GM23248 (cell line): ENCODE measurements at regions of chr15 and their contacts with region 1.

Region 1: GRCh38 chr15:35078221-35078915 is 6.7 kb downstream of the NANOGP8 start:
- DNase-seq: peak; percentile 72
- H3K4me3 ChIP-seq: no peak overlapping the region
- H3K27ac ChIP-seq: no peak overlapping the region
- H3K4me1 ChIP-seq: no peaks in the 10 kb centered on the region
- H3K27me3 ChIP-seq: no peaks in the 10 kb centered on the region

Region 2: DNA sequence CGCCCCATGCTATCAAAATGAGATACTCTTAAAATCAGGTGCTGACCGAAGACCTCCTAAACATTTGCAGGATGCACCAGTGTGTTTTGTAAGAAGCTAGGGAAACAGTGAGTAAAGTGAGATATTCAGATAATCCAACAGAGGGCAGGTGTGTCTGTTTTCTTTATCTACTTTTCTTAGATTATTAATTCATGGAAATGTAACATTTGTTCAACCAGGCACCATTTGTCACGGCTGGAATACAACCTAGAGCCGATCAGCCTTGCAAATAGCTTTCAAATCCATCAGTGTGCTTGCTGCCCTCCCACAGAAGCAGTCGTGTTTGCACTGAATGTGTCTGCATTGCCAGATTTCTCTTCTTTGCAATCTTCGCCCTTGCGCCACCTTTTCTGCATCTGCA is 1312.0 kb before region 1 on chr15:
- in situ Hi-C with region 1: no loop called
- DNase-seq: peak; percentile 20
- H3K4me3 ChIP-seq: no peak overlapping the region
- H3K27ac ChIP-seq: no peak overlapping the region
- H3K4me1 ChIP-seq: no peaks in the 10 kb centered on the region
- H3K27me3 ChIP-seq: peaks cover 19% of the 10 kb centered on the region

Region 3: GRCh38 chr15:35410774-35411173 is 332.4 kb after region 1 on chr15:
- in situ Hi-C with region 1: no loop called
- DNase-seq: no peak
- H3K4me3 ChIP-seq: no peak overlapping the region
- H3K27ac ChIP-seq: no peak overlapping the region
- H3K4me1 ChIP-seq: no peaks in the 10 kb centered on the region
- H3K27me3 ChIP-seq: no peaks in the 10 kb centered on the region

Region 4: GRCh38 chr15:35444557-35445204 is 366.3 kb after region 1 on chr15:
- in situ Hi-C with region 1: loop called (anchors 10 kb)
- DNase-seq: peak; percentile 67
- H3K4me3 ChIP-seq: no peak overlapping the region
- H3K27ac ChIP-seq: no peak overlapping the region
- H3K4me1 ChIP-seq: peaks cover 23% of the 10 kb centered on the region
- H3K27me3 ChIP-seq: no peaks in the 10 kb centered on the region